ENCODE measurements at regions of chr1 and their contacts with region 1.

Region 1: DNA sequence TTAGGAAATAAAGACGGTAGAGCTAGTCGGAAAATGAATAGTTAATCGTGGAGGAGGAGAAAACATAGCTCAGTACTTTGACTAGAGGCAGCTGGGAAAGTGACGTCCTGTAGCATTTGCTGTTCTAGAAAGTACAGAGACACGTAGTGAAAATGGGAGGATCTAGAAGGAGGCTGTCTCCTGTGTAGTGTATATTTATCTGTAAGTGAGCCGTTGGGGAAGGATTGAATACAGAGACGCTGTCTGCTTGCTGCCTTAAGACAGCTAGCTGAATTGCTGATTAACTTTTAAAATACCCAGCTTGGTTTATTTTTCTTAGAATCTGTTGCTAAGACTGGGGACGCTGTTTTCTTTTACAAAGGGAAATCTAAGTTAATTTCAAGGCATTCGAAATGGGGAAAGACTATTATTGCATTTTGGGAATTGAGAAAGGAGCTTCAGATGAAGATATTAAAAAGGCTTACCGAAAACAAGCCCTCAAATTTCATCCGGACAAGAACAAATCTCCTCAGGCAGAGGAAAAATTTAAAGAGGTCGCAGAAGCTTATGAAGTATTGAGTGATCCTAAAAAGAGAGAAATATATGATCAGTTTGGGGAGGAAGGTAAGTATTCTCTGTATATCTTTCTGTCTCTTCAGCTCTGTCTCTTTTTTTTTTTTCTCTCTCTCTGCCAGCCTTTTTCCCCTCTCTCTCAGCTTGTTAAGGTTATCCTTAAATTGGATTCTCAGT is at the start of gene DNAJB4:
- DNase-seq: peak; percentile 98
- H3K4me3 ChIP-seq: peak within 1 kb of the TSS; percentile 69 to 99 (median 98)
- H3K27ac ChIP-seq: peak within 1 kb of the TSS; percentile 82
- H3K4me1 ChIP-seq: peaks cover 29% of the 10 kb centered on the region
- H3K27me3 ChIP-seq: no peaks in the 10 kb centered on the region
- CTCF ChIP-seq: no peak
- POLR2A ChIP-seq: peak; percentile 94
- total RNA-seq, gene DNAJB4: 122 and 136 TPM in 2 replicates

Region 2: DNA sequence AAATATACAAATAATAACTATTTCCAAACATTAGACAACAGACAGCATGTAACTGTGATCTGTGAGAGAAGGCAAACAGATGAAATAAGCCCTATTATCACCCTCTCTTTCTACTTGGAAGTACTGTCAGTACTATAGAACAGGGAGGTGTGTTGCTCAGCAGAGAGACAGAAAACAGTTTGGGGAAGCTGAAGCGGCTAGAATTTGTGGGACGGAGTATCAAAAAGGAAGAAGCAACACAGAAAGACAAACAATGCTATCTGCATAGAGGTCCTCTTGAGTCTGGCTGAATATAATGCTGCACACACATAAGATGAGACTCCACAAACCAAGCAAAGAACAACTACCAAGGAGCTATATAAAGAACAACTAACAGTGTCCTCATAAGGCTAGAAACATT is 381.8 kb before region 1 on chr1:
- CTCF ChIA-PET with region 1: no interaction called
- POLR2A ChIA-PET with region 1: no interaction called
- dilution Hi-C with region 1: no loop called
- intact Hi-C with region 1: no loop called
- DNase-seq: no peak
- H3K4me3 ChIP-seq: no peak overlapping the region
- H3K27ac ChIP-seq: no peak overlapping the region
- H3K4me1 ChIP-seq: peaks cover 34% of the 10 kb centered on the region
- H3K27me3 ChIP-seq: no peaks in the 10 kb centered on the region
- CTCF ChIP-seq: no peak
- POLR2A ChIP-seq: no peak

Region 3: DNA sequence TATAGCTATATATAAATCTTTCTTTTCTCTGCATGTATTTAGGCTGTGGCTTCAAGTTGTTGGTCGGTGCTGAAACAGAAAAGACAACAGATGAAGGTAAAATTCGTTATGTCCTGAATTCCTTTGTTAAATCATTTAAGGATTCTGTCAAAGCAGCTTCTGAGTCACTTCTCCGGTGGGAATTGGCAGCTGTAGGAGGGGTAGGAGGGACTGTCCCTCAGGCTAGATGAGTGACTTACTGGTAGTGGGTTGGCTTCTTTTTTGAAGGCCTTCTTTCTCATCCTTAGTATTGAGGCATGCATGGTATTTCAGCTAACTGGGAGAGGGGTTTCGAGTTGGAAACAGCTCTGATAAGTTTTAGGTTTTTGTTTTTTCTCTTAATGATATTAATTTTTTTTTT is 138.6 kb before region 1 on chr1:
- CTCF ChIA-PET with region 1: no interaction called
- POLR2A ChIA-PET with region 1: no interaction called
- dilution Hi-C with region 1: no loop called
- intact Hi-C with region 1: no loop called
- DNase-seq: no peak
- H3K4me3 ChIP-seq: no peak overlapping the region
- H3K27ac ChIP-seq: no peak overlapping the region
- H3K4me1 ChIP-seq: no peaks in the 10 kb centered on the region
- H3K27me3 ChIP-seq: no peaks in the 10 kb centered on the region
- CTCF ChIP-seq: no peak
- POLR2A ChIP-seq: no peak

Region 4: DNA sequence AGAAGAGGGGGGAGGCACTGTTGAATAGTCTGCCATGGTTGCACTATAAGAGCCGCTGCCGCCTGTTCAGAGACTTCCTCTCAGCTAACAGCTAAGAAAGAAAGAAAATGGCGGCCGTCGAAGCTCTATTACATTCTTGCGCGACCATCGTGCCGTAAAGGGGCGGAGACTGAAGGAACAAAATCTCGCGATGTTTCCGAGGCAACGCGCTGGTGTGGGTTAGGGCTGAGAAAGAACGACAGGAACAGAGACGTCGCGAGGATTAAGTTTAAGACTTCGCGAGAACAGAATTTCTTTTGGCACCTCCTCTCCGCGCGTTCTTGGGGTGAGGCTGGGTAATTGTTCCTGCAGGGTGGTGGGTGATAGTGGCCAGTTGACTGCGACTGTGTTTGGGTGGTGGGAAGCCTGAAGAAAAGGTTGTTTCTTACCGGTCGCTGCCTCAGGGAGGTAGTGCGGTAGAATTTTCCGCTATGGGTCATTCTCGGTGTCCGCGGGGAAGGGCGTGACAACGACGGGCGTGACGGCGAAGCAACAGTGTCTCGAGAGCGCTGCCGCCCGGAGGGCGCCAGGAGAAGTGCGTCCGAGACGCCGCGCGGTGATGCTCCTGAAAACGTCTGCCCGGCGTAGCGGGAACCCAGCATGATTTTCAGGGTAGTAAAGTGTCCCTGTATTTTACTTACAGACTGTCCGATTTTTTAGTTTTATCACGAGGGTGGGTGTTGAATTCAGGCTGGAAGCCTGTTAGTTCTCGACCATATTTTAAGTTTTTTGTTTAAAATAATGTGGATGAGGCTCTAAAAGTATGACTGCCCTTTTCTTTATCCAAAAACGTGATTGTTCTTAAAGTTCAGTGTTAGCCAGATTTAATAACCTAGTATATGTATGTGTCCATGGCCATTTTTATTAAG is 25.7 kb before region 1 on chr1 and contains the start of gene FUBP1:
- CTCF ChIA-PET with region 1: interaction called, 37 read pairs
- POLR2A ChIA-PET with region 1: interaction called, 122 read pairs
- dilution Hi-C with region 1: no loop called
- intact Hi-C with region 1: loop called (anchors 1 kb)
- DNase-seq: peak; percentile 99
- H3K4me3 ChIP-seq: peak within 1 kb of the TSS; percentile 43 to 100 (median 95)
- H3K27ac ChIP-seq: peak within 1 kb of the TSS; percentile 100
- H3K4me1 ChIP-seq: peaks cover 38% of the 10 kb centered on the region
- H3K27me3 ChIP-seq: no peaks in the 10 kb centered on the region
- CTCF ChIP-seq: peak; percentile 66 to 76
- POLR2A ChIP-seq: peak; percentile 98
- total RNA-seq, gene FUBP1: 163 and 166 TPM in 2 replicates

Region 5: DNA sequence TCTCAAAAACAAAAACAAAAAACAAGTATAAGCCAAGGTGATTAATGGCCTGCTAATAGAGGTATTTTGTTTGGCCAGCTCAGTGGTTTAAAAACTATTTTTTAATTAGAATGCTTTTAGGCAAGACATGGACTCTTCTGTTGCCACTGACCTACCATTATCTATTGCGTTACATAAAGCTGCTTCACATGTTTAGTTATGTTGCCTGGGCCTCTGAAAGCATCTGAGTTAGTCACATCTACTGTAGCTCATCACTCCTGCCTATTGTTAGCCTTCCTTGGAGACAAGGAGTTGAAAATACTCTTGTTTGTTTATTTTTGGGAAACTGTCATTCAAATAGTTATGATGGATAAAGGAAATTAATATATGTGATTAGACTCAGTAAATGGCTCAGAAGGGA is 14.1 kb after region 1 on chr1:
- CTCF ChIA-PET with region 1: interaction called, 7 read pairs
- POLR2A ChIA-PET with region 1: interaction called, 14 read pairs
- dilution Hi-C with region 1: no loop called
- intact Hi-C with region 1: no loop called
- DNase-seq: no peak
- H3K4me3 ChIP-seq: no peak overlapping the region
- H3K27ac ChIP-seq: no peak overlapping the region
- H3K4me1 ChIP-seq: no peaks in the 10 kb centered on the region
- H3K27me3 ChIP-seq: no peaks in the 10 kb centered on the region
- CTCF ChIP-seq: no peak
- POLR2A ChIP-seq: no peak

Region 6: DNA sequence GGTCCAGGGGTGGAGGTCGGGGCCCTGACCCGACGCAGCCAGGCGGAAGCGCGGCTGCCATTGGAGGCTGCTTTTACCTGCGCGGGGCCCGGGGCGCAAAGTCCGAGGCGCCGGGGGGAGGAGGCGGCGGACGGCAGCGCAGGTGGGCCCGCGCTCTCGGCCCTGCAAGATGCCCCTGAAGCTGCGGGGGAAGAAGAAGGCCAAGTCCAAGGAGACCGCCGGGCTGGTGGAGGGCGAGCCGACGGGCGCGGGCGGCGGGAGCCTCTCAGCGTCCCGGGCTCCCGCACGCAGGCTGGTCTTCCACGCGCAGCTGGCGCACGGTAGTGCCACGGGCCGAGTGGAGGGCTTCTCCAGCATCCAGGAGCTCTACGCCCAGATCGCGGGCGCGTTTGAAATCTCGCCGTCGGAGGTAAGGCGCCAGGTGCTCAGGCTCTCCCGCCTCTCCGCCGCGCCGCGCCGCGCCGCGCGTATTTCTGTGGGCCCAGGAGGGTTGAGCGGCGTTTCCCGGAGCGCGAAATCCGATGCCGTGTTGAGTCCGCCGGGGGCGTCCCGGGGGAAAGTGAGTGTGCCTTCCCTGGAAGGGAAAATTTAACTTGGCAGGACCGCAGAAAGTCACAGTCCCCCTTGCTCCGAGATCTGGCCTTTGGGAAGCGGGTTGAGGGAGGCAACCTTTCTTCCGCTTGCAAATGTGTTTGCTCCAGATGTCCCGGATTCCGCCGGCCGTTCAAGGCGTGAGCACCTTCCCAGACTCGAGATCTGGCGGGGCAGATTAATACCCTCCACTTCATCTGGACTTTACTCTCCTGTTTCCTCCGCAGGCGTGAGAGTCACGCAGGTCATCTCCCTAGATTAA is 41.3 kb after region 1 on chr1 and contains the start of gene GIPC2:
- CTCF ChIA-PET with region 1: interaction called, 6 read pairs
- POLR2A ChIA-PET with region 1: interaction called, 14 read pairs
- dilution Hi-C with region 1: no loop called
- intact Hi-C with region 1: loop called (anchors 1 kb)
- DNase-seq: peak; percentile 59
- H3K4me3 ChIP-seq: peak within 1 kb of the TSS; percentile 63 to 74 (median 73)
- H3K27ac ChIP-seq: peak within 1 kb of the TSS; percentile 53
- H3K4me1 ChIP-seq: peaks cover 31% of the 10 kb centered on the region
- H3K27me3 ChIP-seq: no peaks in the 10 kb centered on the region
- CTCF ChIP-seq: no peak
- POLR2A ChIP-seq: no peak
- total RNA-seq, gene GIPC2: 7.7 and 9.6 TPM in 2 replicates

Region 7: DNA sequence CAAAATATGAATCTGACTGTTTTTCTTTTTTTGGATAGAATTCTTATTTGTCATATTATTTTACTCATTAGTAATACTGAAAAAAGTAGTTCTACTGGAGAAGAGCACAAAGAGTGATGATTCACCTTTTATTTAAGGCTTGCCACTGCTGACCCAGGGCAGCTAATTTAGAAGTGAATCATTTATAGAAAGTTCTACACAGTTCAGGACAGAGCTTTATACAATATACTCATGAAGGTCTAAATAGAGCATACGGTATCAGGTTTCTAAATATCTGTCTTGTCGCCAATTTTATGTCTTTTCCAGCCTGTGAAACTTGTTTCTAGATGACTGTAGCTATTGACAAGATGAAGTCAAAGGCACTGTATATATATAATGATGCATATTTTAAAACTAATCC is 65.9 kb after region 1 on chr1:
- CTCF ChIA-PET with region 1: interaction called, 7 read pairs
- POLR2A ChIA-PET with region 1: interaction called, 30 read pairs
- dilution Hi-C with region 1: no loop called
- intact Hi-C with region 1: loop called (anchors 1 kb)
- DNase-seq: peak; percentile 87
- H3K4me3 ChIP-seq: no peak overlapping the region
- H3K27ac ChIP-seq: peak overlapping the region; percentile 48
- H3K4me1 ChIP-seq: peaks cover 54% of the 10 kb centered on the region
- H3K27me3 ChIP-seq: no peaks in the 10 kb centered on the region
- CTCF ChIP-seq: no peak
- POLR2A ChIP-seq: no peak

Region 8: GRCh38 chr1:78095593-78095992 is 90.7 kb after region 1 on chr1:
- CTCF ChIA-PET with region 1: interaction called, 7 read pairs
- POLR2A ChIA-PET with region 1: interaction called, 35 read pairs
- dilution Hi-C with region 1: no loop called
- intact Hi-C with region 1: no loop called
- DNase-seq: peak; percentile 86
- H3K4me3 ChIP-seq: no peak overlapping the region
- H3K27ac ChIP-seq: peak overlapping the region; percentile 91
- H3K4me1 ChIP-seq: peaks cover 46% of the 10 kb centered on the region
- H3K27me3 ChIP-seq: no peaks in the 10 kb centered on the region
- CTCF ChIP-seq: no peak
- POLR2A ChIP-seq: no peak